ENCODE measurements at regions of chr2 and their contacts with region 1.

Region 1: GRCh38 chr2:30231212-30231995 is at the start of gene LBH:
- DNase-seq: peak; percentile 87 to 95
- ATAC-seq: peak; percentile 91
- H3K4me3 ChIP-seq: peak within 1 kb of the TSS; percentile 91 to 92
- H3K27ac ChIP-seq: peak within 1 kb of the TSS; percentile 67 to 94
- H3K4me1 ChIP-seq: peaks cover 2 to 3% of the 10 kb centered on the region in 2 donors
- H3K27me3 ChIP-seq: no peaks in the 10 kb centered on the region
- total RNA-seq, gene LBH: 105 to 213 TPM

Region 2: GRCh38 chr2:30346471-30347169 is 115.2 kb after region 1 on chr2:
- intact Hi-C with region 1: loop called (anchors 5 to 10 kb)
- DNase-seq: peak; percentile 84 to 90
- ATAC-seq: peak; percentile 95
- H3K4me3 ChIP-seq: no peak overlapping the region
- H3K27ac ChIP-seq: peak overlapping the region in 1 of 2 donors; percentile 87
- H3K4me1 ChIP-seq: no peaks in the 10 kb centered on the region
- H3K27me3 ChIP-seq: no peaks in the 10 kb centered on the region

Region 3: DNA sequence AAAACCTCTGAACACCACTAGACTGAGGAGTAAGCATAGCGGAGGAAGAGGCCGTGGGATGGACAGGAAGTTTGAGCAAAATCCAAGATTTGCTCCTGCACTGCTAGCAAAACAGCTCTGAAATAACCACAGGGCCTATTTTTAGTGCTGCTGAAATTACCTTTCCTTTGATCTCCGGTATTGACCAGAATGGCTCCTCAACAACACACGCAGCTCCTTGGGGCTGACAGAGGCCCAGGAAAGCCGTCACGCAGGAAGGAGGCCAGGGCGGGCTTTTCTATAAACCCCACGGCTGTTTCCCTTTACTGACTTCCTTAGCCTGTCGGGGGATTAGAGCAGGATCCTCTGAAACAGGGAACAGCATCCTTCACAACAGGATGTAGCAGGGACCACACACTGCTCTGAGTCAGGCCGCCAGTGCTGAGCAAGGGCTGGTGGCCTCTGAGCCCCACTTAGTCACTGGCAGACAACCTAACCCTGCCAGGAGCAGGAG is 134.8 kb after region 1 on chr2:
- intact Hi-C with region 1: loop called (anchors 5 kb)
- DNase-seq: no peak
- ATAC-seq: no peak
- H3K4me3 ChIP-seq: no peak overlapping the region
- H3K27ac ChIP-seq: no peak overlapping the region
- H3K4me1 ChIP-seq: peaks cover 5 to 7% of the 10 kb centered on the region in 2 donors
- H3K27me3 ChIP-seq: no peaks in the 10 kb centered on the region

Region 4: GRCh38 chr2:30421604-30422443 is 190.4 kb after region 1 on chr2:
- intact Hi-C with region 1: loop called (anchors 5 to 10 kb)
- DNase-seq: no peak
- ATAC-seq: peak; percentile 64
- H3K4me3 ChIP-seq: no peak overlapping the region
- H3K27ac ChIP-seq: peak overlapping the region; percentile 68
- H3K4me1 ChIP-seq: peaks cover 0 to 2% of the 10 kb centered on the region in 2 donors
- H3K27me3 ChIP-seq: no peaks in the 10 kb centered on the region

Region 5: GRCh38 chr2:30472326-30472725 is 240.9 kb after region 1 on chr2:
- intact Hi-C with region 1: loop called in 1 of 2 experiments (anchors 10 kb)
- DNase-seq: no peak
- ATAC-seq: no peak
- H3K4me3 ChIP-seq: no peak overlapping the region
- H3K27ac ChIP-seq: no peak overlapping the region
- H3K4me1 ChIP-seq: no peaks in the 10 kb centered on the region
- H3K27me3 ChIP-seq: no peaks in the 10 kb centered on the region

Region 6: DNA sequence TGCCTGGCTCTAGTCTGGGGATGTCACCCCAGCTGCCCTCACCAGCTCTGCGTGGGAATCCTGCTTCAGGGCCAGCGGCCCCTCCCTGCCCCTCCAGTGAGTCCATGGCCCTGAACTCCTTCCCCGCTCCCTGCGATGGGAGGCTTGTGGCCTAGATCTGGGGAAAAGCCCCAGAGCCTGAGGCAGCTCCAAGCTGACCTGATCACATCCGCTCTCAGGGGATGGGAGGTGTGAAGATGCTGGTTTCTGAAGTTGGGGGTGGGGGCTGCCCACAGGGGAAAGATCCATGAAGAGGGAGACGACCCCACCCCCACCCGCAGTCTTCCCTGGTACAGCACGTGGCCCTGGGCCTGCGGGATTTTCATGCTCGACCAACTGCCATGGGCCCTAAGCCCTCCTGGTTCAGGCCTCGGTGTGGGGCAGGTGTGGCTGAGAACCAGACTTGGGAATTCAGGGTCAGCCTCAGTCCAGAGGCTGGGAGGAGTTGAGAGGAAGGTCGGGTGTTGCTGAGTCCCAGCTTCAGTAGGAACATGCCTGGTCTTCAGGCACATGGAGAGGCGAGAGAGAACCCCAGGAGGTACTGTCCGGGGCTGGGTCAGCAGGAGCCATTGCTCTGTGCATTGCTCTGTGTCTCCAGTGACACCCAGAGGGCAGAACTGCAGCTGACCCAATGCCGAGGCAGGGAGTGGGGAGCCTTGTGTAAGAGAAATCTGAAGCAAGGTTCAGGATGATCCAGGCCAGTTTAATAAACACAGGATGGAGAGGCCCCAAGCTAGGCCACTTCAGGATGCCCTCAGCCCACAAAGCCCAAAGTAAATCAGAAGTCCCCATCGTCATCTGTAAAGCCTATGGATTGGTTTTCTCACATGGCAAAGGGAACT is 460.8 kb after region 1 on chr2:
- intact Hi-C with region 1: loop called in 1 of 2 experiments (anchors 5 kb)
- DNase-seq: no peak
- ATAC-seq: no peak
- H3K4me3 ChIP-seq: no peak overlapping the region
- H3K27ac ChIP-seq: peak overlapping the region; percentile 31 to 79
- H3K4me1 ChIP-seq: peaks cover 0 to 6% of the 10 kb centered on the region in 2 donors
- H3K27me3 ChIP-seq: no peaks in the 10 kb centered on the region